PC-9 (cell line): ENCODE measurements at regions of chr7 and their contacts with region 1.

Region 1: DNA sequence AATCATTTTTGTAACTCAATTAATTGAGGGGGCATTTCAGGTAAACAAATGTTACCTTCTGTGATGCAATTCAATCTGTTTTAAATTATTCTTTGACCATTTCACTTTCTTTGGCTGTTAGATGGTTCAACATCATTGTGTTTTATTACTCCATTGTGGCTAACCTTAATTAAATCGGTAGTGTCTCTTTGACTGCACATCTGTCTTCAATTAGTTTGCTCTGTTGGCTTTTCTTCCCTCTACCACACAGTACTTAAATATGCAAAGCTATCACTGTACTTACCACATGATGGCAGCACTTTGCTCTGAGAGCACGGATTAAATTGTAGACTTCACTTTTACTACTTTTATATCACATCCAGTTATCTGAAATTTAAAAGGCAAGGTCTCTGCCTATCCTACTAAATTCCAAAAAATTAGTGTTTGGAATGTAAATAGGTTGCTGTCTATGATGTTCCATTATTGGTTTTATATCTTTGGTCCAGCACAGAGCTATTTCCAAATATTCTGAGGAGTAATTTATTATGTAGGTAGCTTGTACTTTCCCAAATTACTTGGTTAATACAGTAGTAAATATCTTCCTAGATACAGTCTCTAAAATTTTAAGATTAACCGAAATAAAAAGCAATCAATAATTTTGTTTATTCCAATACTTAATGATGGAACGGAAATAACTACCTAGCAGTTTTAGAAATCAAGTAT is 352.0 kb downstream of the PCLO start:
- DNase-seq: peak in 1 of 2 experiments; percentile 9
- H3K4me3 ChIP-seq: no peak overlapping the region
- H3K27ac ChIP-seq: no peak overlapping the region
- H3K4me1 ChIP-seq: 0 out of 2 replicates have a peak, but pooled peaks cover 3% of the 10 kb centered on the region
- H3K27me3 ChIP-seq: no peaks in the 10 kb centered on the region
- CTCF ChIP-seq: peak; percentile 79

Region 2: DNA sequence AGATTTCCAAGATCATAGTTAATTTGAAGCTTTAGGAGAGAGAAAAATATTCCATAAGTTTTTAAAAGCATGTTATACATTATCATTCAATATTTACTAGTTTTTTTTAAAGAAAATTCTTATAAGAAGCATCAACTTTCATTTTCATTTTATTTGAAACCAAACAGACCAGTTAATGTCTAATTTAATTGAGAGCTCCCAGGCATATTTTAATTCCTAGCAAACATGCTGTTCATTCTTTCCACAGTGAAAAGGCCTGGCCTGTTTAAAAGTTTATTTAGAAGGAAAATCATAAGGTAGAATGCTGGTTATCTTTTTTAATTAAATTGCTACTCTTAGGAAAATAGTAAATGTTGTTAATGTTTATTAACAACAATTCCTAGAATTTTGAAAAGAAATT is 27.6 kb after region 1 on chr7:
- CTCF ChIA-PET with region 1: no interaction called
- POLR2A ChIA-PET with region 1: no interaction called
- intact Hi-C with region 1: no loop called
- DNase-seq: no peak
- H3K4me3 ChIP-seq: no peak overlapping the region
- H3K27ac ChIP-seq: no peak overlapping the region
- H3K4me1 ChIP-seq: no peaks in the 10 kb centered on the region
- H3K27me3 ChIP-seq: no peaks in the 10 kb centered on the region
- CTCF ChIP-seq: no peak

Region 3: DNA sequence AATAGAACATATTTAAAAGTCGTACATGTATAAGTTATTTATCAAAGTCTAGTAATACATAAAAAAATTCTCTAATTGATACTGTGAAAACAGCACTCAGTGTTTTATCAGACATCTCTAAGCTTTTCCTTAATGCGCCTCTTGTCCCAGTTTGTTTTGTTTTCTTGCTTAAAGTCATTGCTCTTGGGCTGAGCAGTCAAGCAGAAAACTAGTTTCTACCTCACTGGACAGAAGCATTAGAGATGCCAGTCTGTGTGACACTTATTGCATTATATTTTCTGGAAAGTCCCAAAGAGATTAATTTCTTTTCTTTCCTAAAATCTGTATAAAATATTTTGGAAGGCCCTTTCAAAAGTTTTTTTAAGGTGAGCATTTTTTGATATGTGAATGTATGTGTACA is 115.8 kb after region 1 on chr7:
- CTCF ChIA-PET with region 1: no interaction called
- POLR2A ChIA-PET with region 1: no interaction called
- intact Hi-C with region 1: no loop called
- DNase-seq: no peak
- H3K4me3 ChIP-seq: no peak overlapping the region
- H3K27ac ChIP-seq: no peak overlapping the region
- H3K4me1 ChIP-seq: no peaks in the 10 kb centered on the region
- H3K27me3 ChIP-seq: no peaks in the 10 kb centered on the region
- CTCF ChIP-seq: no peak

Region 4: DNA sequence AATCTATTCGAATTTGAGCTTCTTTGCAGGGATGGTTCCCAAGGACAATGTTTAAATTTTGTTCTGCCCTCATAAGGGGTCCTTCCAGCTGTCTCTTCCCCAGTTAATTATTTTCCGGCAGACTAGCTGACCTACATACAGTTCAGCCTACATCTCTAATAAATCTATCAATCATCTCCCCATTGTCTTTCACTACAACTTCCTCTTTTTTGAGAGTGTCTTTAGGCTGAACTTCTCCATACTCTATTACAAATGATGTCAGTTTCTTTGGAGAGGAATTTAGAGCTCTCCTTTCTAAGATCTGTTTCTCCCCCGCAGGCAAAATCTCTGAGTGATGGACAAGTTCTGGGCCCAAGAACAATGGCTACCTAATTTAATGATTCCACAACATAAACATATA is 229.8 kb after region 1 on chr7:
- CTCF ChIA-PET with region 1: no interaction called
- POLR2A ChIA-PET with region 1: no interaction called
- intact Hi-C with region 1: no loop called
- DNase-seq: no peak
- H3K4me3 ChIP-seq: no peak overlapping the region
- H3K27ac ChIP-seq: no peak overlapping the region
- H3K4me1 ChIP-seq: no peaks in the 10 kb centered on the region
- H3K27me3 ChIP-seq: no peaks in the 10 kb centered on the region
- CTCF ChIP-seq: no peak

Region 5: GRCh38 chr7:83072576-83073517 is 262.1 kb after region 1 on chr7:
- CTCF ChIA-PET with region 1: interaction called, 9 read pairs
- POLR2A ChIA-PET with region 1: no interaction called
- intact Hi-C with region 1: loop called (anchors 2 kb)
- DNase-seq: no peak
- H3K4me3 ChIP-seq: no peak overlapping the region
- H3K27ac ChIP-seq: no peak overlapping the region
- H3K4me1 ChIP-seq: no peaks in the 10 kb centered on the region
- H3K27me3 ChIP-seq: no peaks in the 10 kb centered on the region
- CTCF ChIP-seq: peak; percentile 39; the same call in 1 of the 2 replicates

Region 6: DNA sequence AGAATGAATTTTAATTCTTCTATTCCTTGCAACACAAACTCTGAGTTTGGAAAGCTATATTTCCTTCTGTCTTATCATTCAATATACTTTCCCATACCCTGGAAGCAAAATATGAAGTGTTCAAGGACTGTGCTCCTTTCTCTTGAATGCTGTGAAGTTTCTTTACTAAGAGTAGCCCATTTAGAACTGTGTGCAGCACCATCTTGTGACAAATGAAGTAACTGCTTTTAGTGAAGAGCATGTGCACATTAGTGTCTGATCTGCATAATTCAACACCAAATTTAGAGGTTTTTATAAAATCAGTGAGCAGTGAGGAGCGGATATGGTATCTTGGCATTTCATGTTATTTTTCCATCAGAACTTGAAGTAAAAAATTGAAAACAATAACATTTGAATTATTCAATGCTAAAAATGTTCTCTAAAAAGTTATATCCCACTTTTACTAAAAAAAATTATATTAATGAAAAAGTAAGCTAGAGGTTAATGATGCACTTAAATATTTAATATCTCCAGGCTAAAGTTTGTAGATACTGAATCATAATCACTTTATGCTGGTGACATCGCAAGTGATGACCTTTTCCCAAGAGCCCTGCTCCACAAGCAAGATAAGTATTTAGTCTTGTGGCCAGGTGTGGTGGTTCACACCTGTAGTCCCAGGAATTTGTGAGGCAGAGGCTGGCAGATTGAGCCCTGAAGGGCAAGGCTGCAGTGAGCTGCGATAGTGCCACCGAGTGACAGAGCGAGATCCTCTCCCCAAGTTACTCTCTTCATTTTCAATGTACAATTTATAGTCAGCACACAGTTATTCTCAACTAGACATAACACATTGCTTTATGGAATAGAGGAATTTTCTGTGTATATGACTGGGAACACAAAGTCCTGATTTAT is 460.7 kb after region 1 on chr7:
- CTCF ChIA-PET with region 1: no interaction called
- POLR2A ChIA-PET with region 1: no interaction called
- intact Hi-C with region 1: loop called (anchors 1 kb)
- DNase-seq: no peak
- H3K4me3 ChIP-seq: no peak overlapping the region
- H3K27ac ChIP-seq: no peak overlapping the region
- H3K4me1 ChIP-seq: no peaks in the 10 kb centered on the region
- H3K27me3 ChIP-seq: no peaks in the 10 kb centered on the region
- CTCF ChIP-seq: peak; percentile 65; the same call in 1 of the 2 replicates